ENCODE measurements at regions of chr1 and their contacts with region 1.

Region 1: GRCh38 chr1:244652699-244653466 is at the start of gene DESI2:
- DNase-seq: peak; percentile 99
- ATAC-seq: peak; percentile 98
- total RNA-seq, gene DESI2: 19.8 TPM

Region 2: DNA sequence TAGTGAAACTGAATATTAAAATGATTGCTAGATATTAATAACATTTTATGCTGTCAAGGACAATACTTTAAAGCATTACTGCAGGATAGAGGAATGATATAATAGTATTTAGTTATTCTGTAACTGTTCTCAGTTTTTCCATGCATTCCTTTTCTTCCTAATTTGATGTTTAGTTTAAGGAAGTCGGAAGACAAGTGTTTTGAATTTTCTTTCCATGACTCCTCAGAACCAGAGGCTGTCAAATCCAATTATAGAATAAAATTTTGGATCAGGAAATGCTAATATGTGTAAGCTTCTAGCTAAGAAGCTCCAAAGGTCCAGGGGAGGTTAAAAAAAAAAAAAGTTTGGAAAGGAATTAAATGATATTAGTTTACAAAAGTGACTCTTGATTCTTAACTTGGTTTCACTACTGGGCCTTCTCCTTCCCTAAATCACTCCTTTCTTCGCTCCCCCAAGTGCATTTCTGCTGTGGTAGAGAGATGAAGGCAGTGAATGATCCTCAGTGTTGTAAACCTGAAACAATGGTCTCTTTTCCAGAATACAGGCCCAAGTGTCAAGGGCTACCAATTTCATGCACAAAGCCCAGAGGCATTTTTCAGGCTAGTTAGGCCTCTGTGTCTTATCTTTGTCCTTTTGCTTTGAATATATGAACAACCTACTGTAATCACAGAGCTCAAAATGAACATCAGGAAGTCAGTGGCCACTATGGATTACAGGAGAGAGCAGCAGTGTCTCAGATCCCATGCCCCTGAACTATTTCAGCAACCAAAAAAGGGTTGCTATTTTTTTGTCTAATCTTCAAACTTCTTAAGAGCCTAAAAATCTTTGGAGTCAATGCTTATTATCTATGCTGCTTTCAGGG is 207.3 kb before region 1 on chr1:
- intact Hi-C with region 1: loop called (anchors 5 kb)
- DNase-seq: no peak
- ATAC-seq: no peak

Region 3: GRCh38 chr1:244699741-244700140 is 46.9 kb after region 1 on chr1:
- intact Hi-C with region 1: no loop called
- DNase-seq: no peak
- ATAC-seq: no peak